HEK293 (cell line): ENCODE measurements at regions of chr2 and their contacts with region 1.

Region 1: DNA sequence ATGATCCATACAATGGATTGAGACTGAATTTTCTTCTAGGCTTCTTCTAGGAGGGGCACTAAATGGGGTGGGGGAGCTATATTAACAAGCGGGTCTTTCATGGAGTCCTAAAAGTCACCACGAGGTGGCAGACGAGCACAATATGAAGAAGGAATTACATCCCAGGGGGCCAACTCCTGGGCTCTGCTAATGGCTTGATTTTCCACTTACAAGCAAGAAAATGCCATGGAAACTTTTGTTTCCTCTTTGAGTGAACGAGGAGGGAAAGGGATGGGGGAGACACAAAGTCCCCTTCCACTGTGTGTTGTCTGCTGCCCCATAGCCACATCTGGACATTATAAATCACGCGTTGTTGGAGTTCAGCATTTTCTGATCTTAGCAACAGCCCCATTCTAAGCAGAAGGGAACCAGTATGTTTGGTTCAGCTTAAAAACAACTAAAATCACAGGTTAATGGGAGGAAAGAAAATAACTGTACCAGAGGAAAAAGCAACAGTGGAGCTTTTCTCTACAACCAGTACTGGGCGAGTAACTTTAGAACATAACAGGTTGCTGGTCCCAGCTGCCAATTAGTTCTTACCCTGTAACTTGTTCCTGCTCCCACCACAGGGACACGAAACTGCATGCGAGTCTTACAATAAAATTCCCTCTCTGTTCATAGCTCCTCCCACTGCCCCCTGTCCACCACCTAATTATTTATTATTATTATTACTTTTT is 285.0 kb upstream of the PARD3B start:
- H3K4me3 ChIP-seq: no peak overlapping the region
- H3K27ac ChIP-seq: no peak overlapping the region
- H3K4me1 ChIP-seq: peaks cover 3% of the 10 kb centered on the region
- CTCF ChIP-seq: peak; percentile 74

Region 2: DNA sequence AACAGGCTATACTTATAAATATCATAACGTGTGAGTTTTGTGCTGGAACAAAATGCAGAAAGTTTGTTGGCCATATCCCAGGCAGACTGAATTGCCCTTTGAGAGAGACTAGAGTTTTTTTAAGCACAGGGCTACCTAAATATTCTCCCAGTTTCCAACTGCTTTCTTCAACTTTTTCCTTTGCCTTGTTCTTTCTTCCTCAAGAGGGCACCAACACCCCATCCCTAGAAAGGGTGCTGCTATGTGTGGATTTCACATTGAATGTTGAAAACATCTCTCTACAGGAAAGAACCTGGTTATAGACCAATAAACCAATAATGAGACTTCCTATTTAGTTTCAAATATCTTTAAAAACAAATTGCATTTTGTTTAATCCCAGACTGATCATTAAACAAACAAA is 235.8 kb before region 1 on chr2:
- CTCF ChIA-PET with region 1: interaction called, 14 read pairs
- POLR2A ChIA-PET with region 1: no interaction called
- H3K4me3 ChIP-seq: no peak overlapping the region
- H3K27ac ChIP-seq: no peak overlapping the region
- H3K4me1 ChIP-seq: peaks cover 6% of the 10 kb centered on the region; the same call in 1 of the 2 replicates
- CTCF ChIP-seq: peak; percentile 52; the same call in 1 of the 2 replicates

Region 3: DNA sequence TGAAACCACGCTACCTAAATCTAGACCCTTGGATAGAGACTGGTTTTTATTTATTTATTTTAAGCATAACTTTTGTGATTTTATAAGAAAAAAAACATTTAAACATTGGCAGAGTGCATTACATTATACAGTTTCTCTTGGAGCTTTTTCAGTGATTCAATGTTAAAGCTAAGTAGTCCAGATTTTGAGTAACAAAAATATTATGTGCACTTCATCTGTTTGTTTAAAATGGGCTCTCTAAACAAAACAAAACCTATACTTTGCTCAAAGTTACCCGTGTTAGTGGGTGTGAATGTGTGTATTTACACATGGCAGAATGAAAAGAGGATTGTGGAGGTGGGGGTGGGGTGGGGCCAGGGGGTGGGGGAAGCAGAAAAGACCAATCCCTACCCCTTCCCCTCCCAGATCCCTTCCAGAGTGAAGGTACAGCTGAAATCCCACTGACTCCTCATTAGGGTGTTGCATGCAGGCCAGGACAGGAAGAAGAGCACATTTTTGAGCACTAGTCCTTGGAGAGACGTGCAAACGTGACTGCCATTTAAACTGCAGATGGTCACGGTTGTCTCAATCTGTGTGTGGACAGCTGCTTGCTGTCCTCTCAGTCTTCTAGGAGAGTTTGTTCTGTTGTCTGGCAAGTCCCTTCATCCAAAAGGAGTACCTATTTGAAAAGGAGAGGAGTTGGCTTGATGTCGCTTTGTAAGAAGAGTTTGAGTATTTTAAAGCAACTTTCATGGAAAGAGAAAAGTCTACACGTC is 20.7 kb before region 1 on chr2:
- CTCF ChIA-PET with region 1: interaction called, 4 read pairs
- POLR2A ChIA-PET with region 1: interaction called, 10 read pairs
- H3K4me3 ChIP-seq: no peak overlapping the region
- H3K27ac ChIP-seq: no peak overlapping the region
- H3K4me1 ChIP-seq: no peaks in the 10 kb centered on the region
- CTCF ChIP-seq: no peak

Region 4: DNA sequence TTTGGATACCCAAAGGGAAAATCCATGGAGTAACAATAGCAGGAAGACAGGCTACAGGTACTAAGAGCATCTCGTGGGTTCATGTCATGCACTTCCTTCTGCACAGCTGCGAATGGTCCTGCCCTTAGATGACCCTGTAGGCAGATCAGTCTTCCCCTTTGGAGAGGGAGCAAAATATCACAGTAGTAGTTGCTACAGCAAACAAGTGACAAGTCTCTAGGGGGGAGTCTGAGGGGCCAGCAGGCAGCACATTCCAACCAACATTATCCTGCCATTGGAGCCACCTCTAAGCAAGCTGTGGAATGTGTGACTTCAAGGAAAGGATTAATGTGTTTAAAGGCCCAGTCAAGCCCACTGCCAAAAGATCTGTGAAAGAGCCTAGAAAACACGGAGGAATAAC is 11.8 kb after region 1 on chr2:
- CTCF ChIA-PET with region 1: interaction called, 15 read pairs
- POLR2A ChIA-PET with region 1: no interaction called
- H3K4me3 ChIP-seq: no peak overlapping the region
- H3K27ac ChIP-seq: no peak overlapping the region
- H3K4me1 ChIP-seq: no peaks in the 10 kb centered on the region
- CTCF ChIP-seq: no peak

Region 5: GRCh38 chr2:204321910-204322751 is 61.8 kb after region 1 on chr2:
- CTCF ChIA-PET with region 1: interaction called, 15 read pairs
- POLR2A ChIA-PET with region 1: no interaction called
- H3K4me3 ChIP-seq: no peak overlapping the region
- H3K27ac ChIP-seq: no peak overlapping the region
- H3K4me1 ChIP-seq: no peaks in the 10 kb centered on the region
- CTCF ChIP-seq: no peak

Region 6: GRCh38 chr2:204335451-204336058 is 75.2 kb after region 1 on chr2:
- CTCF ChIA-PET with region 1: no interaction called
- POLR2A ChIA-PET with region 1: no interaction called
- H3K4me3 ChIP-seq: no peak overlapping the region
- H3K27ac ChIP-seq: no peak overlapping the region
- H3K4me1 ChIP-seq: no peaks in the 10 kb centered on the region
- CTCF ChIP-seq: no peak